Activated CD8-positive, alpha-beta T cell treated with anti-CD3 and anti-CD28 coated beads for 36 hours (primary cell): ENCODE measurements at regions of chr7 and their contacts with region 1.

Region 1: DNA sequence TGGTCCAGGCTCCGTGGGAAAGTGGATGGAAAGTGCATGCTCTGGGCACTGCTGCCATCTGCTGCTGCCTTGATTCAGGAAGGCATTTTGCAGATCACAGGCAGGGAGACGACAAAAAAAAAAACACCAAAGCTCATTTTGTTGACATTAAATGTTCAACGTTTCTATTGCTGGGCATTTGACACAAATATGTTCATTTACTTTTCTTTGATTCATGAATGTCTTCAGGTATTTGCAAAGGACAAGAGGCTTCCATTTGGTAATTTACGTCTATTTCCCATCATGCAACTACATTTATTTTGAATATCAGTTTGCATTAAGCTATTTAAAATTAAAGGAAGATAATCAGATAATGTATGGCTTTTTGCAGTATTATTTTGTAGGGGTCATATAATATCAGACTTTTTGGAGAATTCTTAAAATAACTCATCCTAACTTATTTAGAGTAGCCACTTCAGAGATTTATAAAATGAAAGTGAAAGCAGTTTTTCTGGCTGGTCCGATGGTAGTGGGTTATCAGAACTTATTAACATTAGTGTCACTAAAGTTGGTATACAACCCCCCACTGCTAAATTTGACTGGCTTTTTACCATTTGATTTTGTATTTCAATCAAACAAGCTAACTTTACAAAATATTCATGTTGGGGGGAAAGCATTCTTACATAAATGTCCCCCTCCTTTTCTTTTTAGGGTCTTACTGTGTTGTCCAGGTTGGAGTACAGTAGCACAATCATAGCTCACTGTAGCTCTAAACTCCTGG is 65.3 kb downstream of the PDIA4 start:
- DNase-seq: peak; percentile 78
- ATAC-seq: peak; percentile 65
- H3K4me3 Mint-ChIP-seq: peak overlapping the region; percentile 76
- H3K27ac Mint-ChIP-seq: peak overlapping the region; percentile 84
- H3K4me1 Mint-ChIP-seq: peaks cover 29% of the 10 kb centered on the region
- H3K27me3 Mint-ChIP-seq: no peaks in the 10 kb centered on the region
- CTCF ChIP-seq: peak; percentile 90

Region 2: GRCh38 chr7:148503875-148504487 is 459.0 kb before region 1 on chr7:
- CTCF ChIA-PET with region 1: interaction called, 8 read pairs
- POLR2A ChIA-PET with region 1: no interaction called
- intact Hi-C with region 1: loop called (anchors 2 kb)
- DNase-seq: no peak
- ATAC-seq: no peak
- H3K4me3 Mint-ChIP-seq: no peak overlapping the region
- H3K27ac Mint-ChIP-seq: no peak overlapping the region
- H3K4me1 Mint-ChIP-seq: peaks cover 8% of the 10 kb centered on the region
- H3K27me3 Mint-ChIP-seq: peaks cover 11% of the 10 kb centered on the region
- CTCF ChIP-seq: peak; percentile 89

Region 3: DNA sequence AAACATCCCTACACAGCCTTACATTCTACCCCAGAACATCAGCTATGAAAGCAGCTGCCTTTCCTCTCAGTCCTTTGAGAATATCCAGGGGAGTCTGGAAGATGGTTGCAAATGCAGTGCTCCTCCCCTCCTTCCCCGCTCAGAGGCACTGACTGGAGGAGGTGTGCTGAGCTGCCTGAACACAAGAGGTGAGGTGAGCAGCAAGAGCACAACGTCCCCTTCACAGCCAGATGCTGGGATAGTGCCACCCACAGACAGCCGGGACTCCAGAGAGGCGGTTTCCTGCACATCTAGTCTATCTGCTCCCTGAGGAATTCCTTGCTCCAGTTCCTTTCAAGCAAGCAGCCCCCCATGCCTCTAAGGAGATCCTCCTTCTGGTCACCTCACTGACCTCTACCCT is 153.1 kb before region 1 on chr7:
- CTCF ChIA-PET with region 1: interaction called, 6 read pairs
- POLR2A ChIA-PET with region 1: no interaction called
- intact Hi-C with region 1: loop called (anchors 10 kb)
- DNase-seq: no peak
- ATAC-seq: no peak
- H3K4me3 Mint-ChIP-seq: no peak overlapping the region
- H3K27ac Mint-ChIP-seq: no peak overlapping the region
- H3K4me1 Mint-ChIP-seq: no peaks in the 10 kb centered on the region
- H3K27me3 Mint-ChIP-seq: no peaks in the 10 kb centered on the region
- CTCF ChIP-seq: no peak

Region 4: DNA sequence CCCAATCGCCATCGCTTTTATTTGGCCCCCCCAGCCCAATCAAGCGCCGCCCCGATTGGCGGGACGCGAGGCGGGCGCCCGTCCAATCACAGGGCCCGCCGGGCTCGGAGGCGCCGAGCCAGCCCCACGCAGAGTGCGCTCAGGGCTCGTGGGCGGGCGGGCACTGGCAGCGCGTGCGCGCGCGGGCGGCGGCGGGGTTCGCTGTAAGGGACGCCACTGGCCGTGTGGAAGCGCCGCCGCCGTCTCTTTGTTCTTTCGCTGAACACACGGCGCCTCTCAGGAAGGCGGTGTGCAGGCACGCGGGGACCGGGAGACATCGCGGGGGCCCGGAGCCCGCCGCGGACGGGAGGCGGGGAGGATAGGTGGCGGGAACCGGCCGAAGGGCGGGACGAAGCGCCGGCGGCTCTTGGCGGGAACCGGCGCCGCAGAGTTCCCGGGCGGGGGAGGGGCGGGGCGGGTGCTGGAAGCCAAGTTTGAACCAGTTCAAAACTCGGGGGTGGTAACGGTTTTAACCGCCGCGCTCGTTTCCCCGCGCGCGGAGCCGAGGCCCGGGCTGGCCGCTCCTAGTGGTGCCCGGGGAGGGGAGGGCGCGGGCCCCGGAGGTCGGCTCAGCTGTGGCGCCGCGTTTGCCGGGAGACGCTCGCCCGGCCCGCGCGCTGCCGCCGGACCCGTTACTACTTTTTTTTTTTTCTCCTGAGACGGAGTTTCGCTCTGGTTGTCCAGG is 78.5 kb before region 1 on chr7:
- CTCF ChIA-PET with region 1: interaction called, 5 read pairs
- POLR2A ChIA-PET with region 1: interaction called, 10 read pairs
- intact Hi-C with region 1: loop called (anchors 5 kb)
- DNase-seq: peak; percentile 94
- ATAC-seq: peak; percentile 93
- H3K4me3 Mint-ChIP-seq: peak overlapping the region; percentile 94
- H3K27ac Mint-ChIP-seq: peak overlapping the region; percentile 98
- H3K4me1 Mint-ChIP-seq: peaks cover 30% of the 10 kb centered on the region
- H3K27me3 Mint-ChIP-seq: no peaks in the 10 kb centered on the region
- CTCF ChIP-seq: no peak

Region 5: DNA sequence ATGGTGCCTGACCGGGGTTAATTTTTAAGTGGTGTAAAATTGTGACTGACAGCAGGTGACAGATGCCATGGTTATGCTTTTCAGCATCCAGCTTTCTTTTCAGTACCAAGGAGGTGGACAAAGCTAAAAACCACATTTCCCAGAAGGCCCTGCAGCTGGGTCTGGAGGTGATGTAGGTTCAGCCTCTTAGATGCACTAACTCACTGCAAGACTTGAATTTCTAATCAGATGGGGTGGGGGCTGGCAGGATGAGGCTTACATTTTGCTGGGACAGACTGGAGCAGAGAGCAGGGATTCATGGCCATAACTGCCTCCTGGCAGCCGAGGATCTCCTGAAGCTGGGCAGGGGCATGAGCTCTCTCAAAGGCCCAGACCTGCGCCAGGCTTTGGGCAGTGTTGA is 12.9 kb after region 1 on chr7:
- CTCF ChIA-PET with region 1: interaction called, 13 read pairs
- POLR2A ChIA-PET with region 1: interaction called, 9 read pairs
- intact Hi-C with region 1: no loop called
- DNase-seq: no peak
- ATAC-seq: no peak
- H3K4me3 Mint-ChIP-seq: no peak overlapping the region
- H3K27ac Mint-ChIP-seq: no peak overlapping the region
- H3K4me1 Mint-ChIP-seq: peaks cover 10% of the 10 kb centered on the region
- H3K27me3 Mint-ChIP-seq: no peaks in the 10 kb centered on the region
- CTCF ChIP-seq: no peak